Mucosa of descending colon (tissue), 3 donors: ENCODE measurements at regions of chr11 and their contacts with region 1.

Region 1: GRCh38 chr11:46006418-46007070 is 84.1 kb downstream of the LARGE2 start:
- DNase-seq: peak in 1 of 3 donors; percentile 77
- ATAC-seq: peak; percentile 87
- H3K4me3 ChIP-seq: no peak overlapping the region
- H3K4me1 ChIP-seq: no peaks in the 10 kb centered on the region
- CTCF ChIP-seq: peak; percentile 40

Region 2: DNA sequence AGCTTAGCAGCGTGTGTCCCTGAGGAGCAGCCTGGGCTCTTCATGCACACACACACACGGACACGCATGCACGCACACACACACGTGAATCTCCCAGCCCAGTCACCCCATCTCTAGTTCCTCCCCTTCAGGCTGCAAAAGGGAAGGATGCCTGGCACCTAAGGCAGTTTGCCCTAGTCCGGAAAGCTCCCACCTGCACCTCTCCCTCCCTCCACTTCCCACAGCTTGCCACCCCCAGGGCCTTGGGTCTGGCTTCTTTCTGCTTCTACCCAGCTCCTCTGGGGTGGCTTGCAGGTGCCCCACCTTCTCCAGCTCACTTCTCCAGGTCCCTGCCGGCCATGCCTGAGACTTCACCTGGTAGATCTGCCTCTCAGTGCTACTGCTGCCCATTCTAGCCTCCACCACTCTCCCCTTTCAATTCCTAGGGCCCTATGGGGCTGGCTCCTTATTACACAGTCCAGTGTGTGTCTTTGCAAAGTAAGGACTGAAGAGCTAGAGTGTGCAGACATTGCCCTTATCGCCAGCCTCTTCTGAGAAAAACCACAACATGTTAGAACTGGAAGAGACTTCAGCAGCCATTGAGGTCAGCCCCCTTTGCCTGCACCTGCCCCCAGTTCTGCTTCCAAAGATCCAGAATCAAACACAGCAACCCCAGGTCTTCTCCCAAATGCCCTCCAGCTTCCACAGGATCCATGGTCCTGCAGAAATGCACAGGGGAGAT is 307.6 kb before region 1 on chr11:
- intact Hi-C with region 1: no loop called
- DNase-seq: no peak
- ATAC-seq: no peak
- H3K4me3 ChIP-seq: no peak overlapping the region
- H3K4me1 ChIP-seq: no peaks in the 10 kb centered on the region
- CTCF ChIP-seq: no peak

Region 3: GRCh38 chr11:45846974-45847910 is 159.3 kb before region 1 on chr11 and contains the start of gene CRY2:
- intact Hi-C with region 1: loop called in 1 of 2 experiments (anchors 10 kb)
- DNase-seq: peak; percentile 99 to 100 (median 100)
- ATAC-seq: peak; percentile 92
- H3K4me3 ChIP-seq: peak within 1 kb of the TSS; percentile 76
- H3K4me1 ChIP-seq: peaks cover 31% of the 10 kb centered on the region
- CTCF ChIP-seq: no peak
- total RNA-seq, gene CRY2: 26.0 to 52.0 (median 28.8) TPM

Region 4: DNA sequence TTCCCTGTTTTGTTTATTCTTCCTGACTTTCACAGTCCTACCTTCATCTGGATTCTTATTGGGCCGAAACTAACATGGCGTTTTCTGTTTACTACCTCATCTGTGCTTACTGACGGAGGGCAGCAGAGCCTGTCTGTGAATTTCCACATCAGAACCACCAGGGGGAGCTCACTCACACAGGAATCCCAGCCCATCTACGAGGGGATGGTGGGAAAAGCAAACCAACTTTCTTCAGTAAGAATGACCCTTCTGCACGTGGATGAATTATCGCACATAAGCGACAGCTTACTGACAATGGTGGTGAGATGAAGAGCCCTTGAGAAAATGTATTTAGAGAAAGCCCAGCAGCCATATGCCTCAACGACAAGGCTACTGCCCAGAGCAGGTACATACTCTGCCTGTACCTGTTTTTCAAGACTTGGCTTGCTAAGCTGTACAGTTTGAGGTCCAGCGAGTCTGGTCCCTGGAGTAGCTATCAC is 41.6 kb before region 1 on chr11:
- intact Hi-C with region 1: loop called (anchors 1 to 5 kb)
- DNase-seq: peak in 2 of 3 donors; percentile 36 to 48
- ATAC-seq: peak; percentile 98
- H3K4me3 ChIP-seq: no peak overlapping the region
- H3K4me1 ChIP-seq: no peaks in the 10 kb centered on the region
- CTCF ChIP-seq: peak; percentile 64